Sciatic nerve (tissue), 2 donors: ENCODE measurements at regions of chr3 and their contacts with region 1.

Region 1: GRCh38 chr3:10738688-10739372 is 77.2 kb upstream of the SLC6A11 start:
- DNase-seq: peak; percentile 84
- ATAC-seq: peak; percentile 66

Region 2: GRCh38 chr3:9765865-9766264 is 973.0 kb before region 1 on chr3:
- intact Hi-C with region 1: no loop called
- DNase-seq: no peak
- ATAC-seq: no peak

Region 3: GRCh38 chr3:10344147-10344943 is 394.5 kb before region 1 on chr3:
- intact Hi-C with region 1: loop called (anchors 5 kb)
- DNase-seq: no peak
- ATAC-seq: peak; percentile 37

Region 4: DNA sequence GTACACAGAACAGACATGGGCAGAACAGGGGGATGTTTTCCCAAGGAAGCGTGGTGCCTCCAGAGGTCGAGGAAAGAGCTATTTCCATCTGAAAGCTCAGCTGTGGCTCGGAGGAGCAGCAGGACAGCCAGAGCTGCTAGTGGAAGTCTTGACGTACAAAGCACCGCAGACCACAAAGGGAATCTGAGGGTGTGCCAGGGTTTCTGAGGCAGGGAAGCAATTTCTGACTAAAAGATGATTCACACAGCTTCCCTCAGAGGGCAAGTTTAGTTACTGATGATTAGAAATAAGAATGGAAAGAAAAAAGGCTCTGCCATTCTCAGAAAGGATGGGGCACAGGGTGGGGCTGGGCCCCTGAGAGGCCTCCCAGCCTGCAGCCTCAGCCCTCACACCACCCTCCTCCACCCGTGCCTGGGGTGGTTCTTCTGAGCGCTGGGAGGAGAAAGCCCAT is 372.2 kb before region 1 on chr3:
- intact Hi-C with region 1: no loop called
- DNase-seq: no peak
- ATAC-seq: peak; percentile 93